Transverse colon (tissue), 4 donors: ENCODE measurements at regions of chr11 and their contacts with region 1.

Region 1: DNA sequence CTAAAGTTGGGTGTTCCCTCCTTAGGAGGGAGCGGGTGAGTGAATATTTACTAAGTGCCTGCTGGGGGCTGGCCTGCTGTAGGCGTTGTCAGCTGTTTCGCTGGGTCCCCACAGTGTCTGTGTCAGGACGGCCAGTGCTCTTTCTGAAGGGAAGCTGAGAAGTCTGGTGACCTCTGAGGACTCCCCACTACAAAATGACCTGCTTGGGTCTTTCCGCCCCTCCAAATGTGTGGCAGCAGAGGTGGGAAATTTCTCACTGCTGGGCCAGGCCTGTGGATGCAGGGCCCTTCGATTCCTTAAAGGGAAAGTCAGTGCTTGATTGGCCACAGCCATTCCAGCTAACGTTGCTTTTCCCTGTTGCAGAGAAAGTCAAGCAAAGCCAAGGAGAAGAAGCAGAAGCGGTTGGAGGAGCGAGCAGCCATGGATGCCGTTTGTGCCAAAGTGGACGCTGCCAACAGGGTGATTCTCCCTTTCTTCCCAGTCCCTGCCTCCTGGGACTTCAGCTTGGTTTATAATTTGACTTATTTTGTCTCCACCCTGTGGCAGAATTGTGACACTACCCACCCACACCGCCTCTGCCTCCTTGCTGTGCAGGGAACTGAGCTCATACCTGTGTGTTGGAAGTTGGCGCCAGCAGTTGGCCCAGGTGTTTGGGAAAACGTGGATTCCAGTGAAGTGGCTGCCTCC is 6.8 kb downstream of the NAA40 start:
- DNase-seq: peak; percentile 75
- H3K4me3 ChIP-seq: no peak overlapping the region
- H3K27ac ChIP-seq: peak overlapping the region; percentile 21 to 73 (median 60)
- H3K4me1 ChIP-seq: peaks cover 12 to 45% (median 13%) of the 10 kb centered on the region in 4 donors
- H3K27me3 ChIP-seq: no peaks in the 10 kb centered on the region
- CTCF ChIP-seq: peak; percentile 72 to 93 (median 73)
- EP300 ChIP-seq: no peak
- POLR2A ChIP-seq: no peak

Region 2: DNA sequence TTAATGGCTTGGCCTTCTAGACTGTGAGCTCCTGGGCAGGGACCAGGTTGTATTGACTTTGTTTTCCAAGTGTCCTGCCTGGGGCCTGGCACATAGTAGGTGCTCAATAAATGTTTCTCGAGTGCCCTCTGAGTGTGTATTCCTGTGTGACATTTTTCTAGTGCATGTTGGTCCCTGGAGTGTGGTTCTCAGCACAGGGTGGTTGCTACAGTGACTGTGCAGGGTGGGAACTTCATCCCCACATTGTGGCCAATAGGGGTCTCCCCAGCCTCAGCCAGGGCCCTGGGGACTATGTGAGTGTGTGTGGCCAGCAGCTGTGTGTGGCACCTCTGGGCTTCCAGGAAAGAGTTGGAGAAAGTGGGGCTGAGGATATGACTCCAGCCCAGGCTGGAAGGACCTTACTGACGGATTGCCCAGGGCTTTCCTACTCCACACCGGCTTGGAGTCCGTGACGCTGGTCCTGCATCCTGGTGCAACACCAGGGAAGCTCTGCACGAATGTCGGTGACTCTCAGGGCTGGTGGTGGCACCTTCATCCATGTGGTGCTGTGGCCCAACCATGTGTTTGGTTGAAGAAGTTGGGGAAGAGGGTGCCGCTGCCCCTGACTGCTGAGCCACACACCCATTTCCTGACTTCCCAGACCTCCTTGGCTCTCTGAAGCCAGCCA is 115.7 kb before region 1 on chr11:
- in situ Hi-C with region 1: loop called (anchors 5 to 10 kb)
- intact Hi-C with region 1: no loop called
- DNase-seq: no peak
- H3K4me3 ChIP-seq: no peak overlapping the region
- H3K27ac ChIP-seq: no peak overlapping the region
- H3K4me1 ChIP-seq: no peaks in the 10 kb centered on the region
- H3K27me3 ChIP-seq: no peaks in the 10 kb centered on the region
- CTCF ChIP-seq: peak in 1 of 5 experiments; percentile 11
- EP300 ChIP-seq: no peak
- POLR2A ChIP-seq: no peak